ENCODE measurements at regions of chr7 and their contacts with region 1.

Region 1: DNA sequence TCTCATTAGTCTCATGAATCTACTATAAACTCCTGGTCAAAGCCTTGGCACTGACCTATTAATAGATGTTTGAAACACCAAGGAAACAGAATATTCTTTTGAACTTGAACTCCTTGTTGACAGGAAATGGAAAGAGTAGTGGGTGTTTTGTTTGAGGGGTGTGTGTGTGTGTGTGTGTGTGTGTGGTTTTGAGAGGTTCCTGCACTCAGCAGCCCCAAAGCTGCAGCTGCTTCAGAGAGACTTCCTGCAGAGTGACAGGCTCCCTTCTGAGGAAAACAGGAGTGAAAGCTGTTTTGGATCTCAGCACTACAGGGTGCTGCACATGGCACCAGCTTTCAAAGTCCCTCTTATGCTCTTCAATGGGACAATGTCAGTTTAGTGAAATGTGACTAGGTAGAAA is 546.5 kb upstream of the STEAP1 start:
- DNase-seq: peak; percentile 88
- H3K4me3 Mint-ChIP-seq: peak overlapping the region; percentile 48
- H3K27ac Mint-ChIP-seq: peak overlapping the region; percentile 93
- H3K4me1 Mint-ChIP-seq: peaks cover 51% of the 10 kb centered on the region
- H3K27me3 Mint-ChIP-seq: peaks cover 2% of the 10 kb centered on the region

Region 2: DNA sequence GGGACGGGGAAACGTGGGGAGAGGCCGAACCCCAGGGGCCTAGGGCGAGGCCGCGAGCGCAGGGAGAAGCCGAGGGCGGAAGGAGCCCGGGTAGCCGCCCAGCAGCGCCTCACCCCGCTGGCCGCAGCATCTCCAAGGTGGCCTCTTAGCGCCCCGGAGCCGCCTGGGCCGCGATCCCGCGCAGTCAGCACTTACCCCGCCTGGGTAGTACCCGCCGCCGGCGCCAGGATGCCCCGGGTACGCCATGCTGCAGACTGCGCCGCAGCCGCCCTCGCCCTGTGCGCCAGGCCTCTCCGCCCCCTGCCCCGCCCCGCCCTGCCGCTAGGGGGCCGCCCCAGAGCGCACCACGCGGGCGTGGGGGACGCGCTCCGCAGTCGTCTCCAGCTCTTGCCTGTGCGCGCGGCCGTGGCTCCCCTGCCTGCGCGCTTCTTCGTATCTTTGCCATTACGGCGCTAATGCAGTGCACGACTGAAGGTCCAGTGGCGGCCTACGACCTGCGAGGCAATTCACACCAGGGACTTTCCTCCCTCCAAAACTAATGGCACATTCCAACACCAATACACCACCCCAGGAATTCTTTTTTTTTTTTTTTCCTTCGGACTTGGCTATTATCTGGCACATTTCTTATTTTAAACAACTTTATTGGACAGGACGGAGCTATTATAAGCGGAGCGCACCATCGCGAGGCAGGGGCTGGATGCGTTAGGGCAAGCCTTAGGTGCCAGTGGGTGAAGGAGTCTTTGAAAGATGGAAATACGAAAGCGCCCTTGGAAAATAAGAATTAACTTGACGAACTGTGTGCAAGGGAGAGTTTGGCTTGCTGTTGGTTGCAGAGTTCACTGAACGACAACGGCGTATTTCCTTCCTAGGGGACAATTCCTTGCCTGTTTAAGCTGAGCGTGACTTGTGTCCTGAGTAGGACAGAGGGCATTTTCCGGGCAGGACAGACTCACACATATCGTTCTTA is 1387.7 kb before region 1 on chr7 and contains the start of gene SRI:
- intact Hi-C with region 1: loop called (anchors 5 kb)
- DNase-seq: peak; percentile 97
- H3K4me3 Mint-ChIP-seq: peak within 1 kb of the TSS; percentile 90
- H3K27ac Mint-ChIP-seq: peak within 1 kb of the TSS; percentile 96
- H3K4me1 Mint-ChIP-seq: peaks cover 28% of the 10 kb centered on the region
- H3K27me3 Mint-ChIP-seq: peaks cover 3% of the 10 kb centered on the region
- total RNA-seq, gene SRI: 188 and 207 TPM in 2 replicates

Region 3: DNA sequence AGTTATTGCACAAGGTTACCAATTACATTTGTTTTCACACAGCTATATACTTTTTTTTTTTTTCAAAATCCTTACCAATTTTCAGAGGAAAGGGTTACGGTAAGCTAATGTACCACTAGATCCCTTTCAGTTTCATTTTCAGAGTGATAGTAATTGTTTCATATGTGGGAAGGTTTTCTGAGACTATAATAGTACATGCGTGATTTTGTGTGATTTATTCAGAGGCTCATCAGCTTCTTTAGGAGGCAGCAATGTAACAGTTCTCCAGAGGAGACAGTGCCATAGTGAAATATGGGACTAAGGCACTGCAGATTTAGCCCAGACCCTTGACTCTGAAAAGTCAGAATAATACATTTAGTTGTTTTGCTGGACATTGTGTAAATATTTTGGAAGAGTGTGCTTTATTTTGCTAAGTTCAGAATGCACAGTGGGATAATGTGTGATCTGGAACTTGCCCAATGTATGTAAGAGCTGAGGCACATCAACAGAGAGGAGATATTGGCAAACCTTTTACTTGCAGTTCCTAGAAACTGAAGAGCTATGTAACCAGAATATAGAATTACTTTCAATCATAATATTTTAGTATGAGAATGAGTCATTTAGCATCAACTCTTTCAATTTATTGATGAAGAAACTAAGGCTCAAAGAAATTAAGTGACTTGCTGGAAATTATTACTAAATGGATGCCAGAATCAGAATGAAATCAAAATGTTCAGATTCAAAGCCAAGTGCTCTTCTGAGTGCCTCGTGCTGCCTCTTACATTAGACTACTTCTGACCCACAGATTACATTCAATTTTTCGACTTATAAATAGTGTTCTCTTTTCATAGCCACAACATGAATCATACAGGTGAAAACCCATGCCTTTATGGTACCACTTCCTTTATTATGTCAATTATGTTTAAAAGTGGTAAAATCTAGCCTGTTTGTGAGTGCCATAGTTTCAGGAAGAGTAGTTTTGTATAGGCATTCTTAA is 604.5 kb before region 1 on chr7:
- intact Hi-C with region 1: loop called (anchors 5 kb)
- DNase-seq: peak; percentile 61
- H3K4me3 Mint-ChIP-seq: peak overlapping the region; percentile 82
- H3K27ac Mint-ChIP-seq: peak overlapping the region; percentile 86
- H3K4me1 Mint-ChIP-seq: peaks cover 13% of the 10 kb centered on the region
- H3K27me3 Mint-ChIP-seq: peaks cover 6% of the 10 kb centered on the region